Natural killer cell (primary cell): ENCODE measurements at regions of chr1 and their contacts with region 1.

Region 1: GRCh38 chr1:234373064-234373958 is at the start of gene COA6:
- DNase-seq: peak; percentile 89 to 95
- ATAC-seq: peak; percentile 87 to 95 (median 90)
- H3K4me3 ChIP-seq: peak within 1 kb of the TSS; percentile 68
- H3K4me3 Mint-ChIP-seq: peak within 1 kb of the TSS; percentile 98
- H3K27ac ChIP-seq: peak within 1 kb of the TSS; percentile 93
- H3K27ac Mint-ChIP-seq: peak within 1 kb of the TSS; percentile 98 to 99
- H3K4me1 ChIP-seq: peaks cover 16% of the 10 kb centered on the region
- H3K4me1 Mint-ChIP-seq: peaks cover 45 to 51% of the 10 kb centered on the region in 2 donors
- H3K27me3 ChIP-seq: no peaks in the 10 kb centered on the region
- H3K27me3 Mint-ChIP-seq: no peaks in the 10 kb centered on the region
- CTCF ChIP-seq: no peak
- total RNA-seq, gene COA6: 8.9 to 11.8 (median 11.6) TPM

Region 2: GRCh38 chr1:234400773-234401172 is 27.5 kb after region 1 on chr1:
- intact Hi-C with region 1: loop called (anchors 1 kb)
- DNase-seq: peak in 1 of 2 donors; percentile 57
- ATAC-seq: peak; percentile 72 to 79 (median 78)
- H3K4me3 ChIP-seq: peak overlapping the region; percentile 17
- H3K4me3 Mint-ChIP-seq: peak overlapping the region; percentile 86
- H3K27ac ChIP-seq: peak overlapping the region; percentile 78
- H3K27ac Mint-ChIP-seq: peak overlapping the region; percentile 87 to 91
- H3K4me1 ChIP-seq: peaks cover 7% of the 10 kb centered on the region
- H3K4me1 Mint-ChIP-seq: peaks cover 33 to 44% of the 10 kb centered on the region in 2 donors
- H3K27me3 ChIP-seq: no peaks in the 10 kb centered on the region
- H3K27me3 Mint-ChIP-seq: no peaks in the 10 kb centered on the region
- CTCF ChIP-seq: no peak

Region 3: DNA sequence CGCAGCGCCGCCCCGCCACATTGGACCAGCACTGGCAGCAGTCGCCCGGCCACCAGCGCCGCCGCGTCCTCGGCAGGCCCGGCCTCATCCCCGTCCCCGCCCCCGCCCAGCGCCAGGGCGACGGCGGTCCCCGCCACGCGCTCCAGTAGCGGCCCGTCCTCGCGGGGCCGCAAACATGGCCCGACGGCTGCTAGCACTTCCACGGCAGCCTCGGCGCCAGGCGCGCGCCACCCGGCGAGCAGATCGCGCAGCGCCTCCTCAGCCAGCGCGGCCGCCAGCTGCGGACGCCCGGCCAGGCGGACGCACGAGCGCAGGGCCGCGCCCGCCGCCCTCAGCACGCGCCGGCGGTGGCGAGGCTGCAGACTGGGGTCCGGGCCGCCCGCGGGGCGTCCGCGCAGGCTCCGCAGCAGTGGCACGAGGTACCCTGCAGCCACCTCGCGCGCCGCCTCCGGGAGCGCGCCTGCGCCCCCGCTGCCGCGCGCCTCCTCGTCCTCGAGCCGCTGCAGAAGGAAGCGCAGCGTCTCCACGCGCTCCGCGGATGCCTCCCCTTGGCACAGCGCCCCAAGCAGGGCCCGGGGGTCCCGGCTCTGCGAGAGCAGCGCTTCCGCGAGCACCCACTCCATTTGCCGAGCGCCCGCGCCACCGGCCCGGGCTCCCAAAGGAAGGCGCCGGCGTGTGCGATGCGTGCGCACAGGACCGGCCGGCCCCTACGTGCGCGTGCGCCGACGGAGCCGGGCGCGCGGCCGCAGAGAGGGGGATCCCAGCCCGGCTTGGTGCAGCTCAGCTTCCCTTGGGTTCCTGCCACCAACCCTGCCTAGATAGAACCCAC is 105.4 kb after region 1 on chr1 and contains the start of gene TARBP1:
- intact Hi-C with region 1: loop called (anchors 2 kb)
- DNase-seq: peak; percentile 74 to 91
- ATAC-seq: peak; percentile 76 to 86 (median 77)
- H3K4me3 ChIP-seq: peak within 1 kb of the TSS; percentile 66
- H3K4me3 Mint-ChIP-seq: peak within 1 kb of the TSS; percentile 87
- H3K27ac ChIP-seq: peak within 1 kb of the TSS; percentile 77
- H3K27ac Mint-ChIP-seq: peak within 1 kb of the TSS; percentile 75 to 78
- H3K4me1 ChIP-seq: peaks cover 17% of the 10 kb centered on the region
- H3K4me1 Mint-ChIP-seq: peaks cover 11 to 21% of the 10 kb centered on the region in 2 donors
- H3K27me3 ChIP-seq: no peaks in the 10 kb centered on the region
- H3K27me3 Mint-ChIP-seq: peaks cover 18 to 19% of the 10 kb centered on the region in 2 donors
- CTCF ChIP-seq: no peak
- total RNA-seq, gene TARBP1: 29.0 to 37.5 (median 32.2) TPM

Region 4: DNA sequence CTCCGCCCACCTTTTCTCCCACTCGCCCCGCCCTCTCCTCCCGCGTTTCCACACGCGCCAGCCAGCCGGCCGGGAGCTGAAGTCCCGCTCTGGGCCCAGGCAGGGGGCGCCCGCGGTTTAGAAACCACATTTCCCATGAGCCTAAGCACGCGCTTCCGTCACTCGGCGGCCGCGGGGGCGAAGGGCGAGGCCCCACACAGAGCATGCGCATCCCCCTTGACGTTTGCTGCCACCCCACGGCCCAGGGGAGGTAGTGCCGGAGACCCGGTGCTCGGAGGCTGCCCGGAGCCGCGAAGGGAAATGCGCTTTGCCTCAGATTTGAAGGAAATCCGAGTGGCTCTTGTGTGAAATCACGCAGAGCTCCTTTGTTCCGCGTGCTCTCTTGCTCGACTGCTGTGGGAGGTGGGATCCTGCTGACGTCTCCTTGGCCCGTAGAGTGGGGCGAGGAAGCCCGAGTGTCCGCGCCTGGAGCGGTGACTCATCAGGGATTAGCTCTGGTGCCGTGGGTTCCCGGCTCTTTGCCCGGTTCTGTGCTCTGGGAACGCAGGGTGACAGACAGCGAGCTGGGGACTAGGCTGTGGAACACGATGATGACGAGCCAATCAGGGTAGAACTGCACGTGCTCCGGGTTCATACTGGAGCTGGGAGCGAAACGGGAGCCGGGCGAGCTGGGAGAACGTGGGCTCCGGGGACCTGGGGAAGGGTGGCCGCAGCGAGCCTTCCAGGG is 1131.3 kb after region 1 on chr1:
- intact Hi-C with region 1: loop called (anchors 10 kb)
- DNase-seq: peak; percentile 95 to 99
- ATAC-seq: peak; percentile 85 to 97 (median 90)
- H3K4me3 ChIP-seq: peak overlapping the region; percentile 98
- H3K4me3 Mint-ChIP-seq: peak overlapping the region; percentile 98
- H3K27ac ChIP-seq: peak overlapping the region; percentile 96
- H3K27ac Mint-ChIP-seq: peak overlapping the region; percentile 96 to 98
- H3K4me1 ChIP-seq: peaks cover 11% of the 10 kb centered on the region
- H3K4me1 Mint-ChIP-seq: peaks cover 21 to 26% of the 10 kb centered on the region in 2 donors
- H3K27me3 ChIP-seq: no peaks in the 10 kb centered on the region
- H3K27me3 Mint-ChIP-seq: peaks cover 0 to 5% of the 10 kb centered on the region in 2 donors
- CTCF ChIP-seq: peak; percentile 73